Dorsolateral prefrontal cortex (tissue), 120 donors: ENCODE measurements at regions of chr10 and their contacts with region 1.

Region 1: DNA sequence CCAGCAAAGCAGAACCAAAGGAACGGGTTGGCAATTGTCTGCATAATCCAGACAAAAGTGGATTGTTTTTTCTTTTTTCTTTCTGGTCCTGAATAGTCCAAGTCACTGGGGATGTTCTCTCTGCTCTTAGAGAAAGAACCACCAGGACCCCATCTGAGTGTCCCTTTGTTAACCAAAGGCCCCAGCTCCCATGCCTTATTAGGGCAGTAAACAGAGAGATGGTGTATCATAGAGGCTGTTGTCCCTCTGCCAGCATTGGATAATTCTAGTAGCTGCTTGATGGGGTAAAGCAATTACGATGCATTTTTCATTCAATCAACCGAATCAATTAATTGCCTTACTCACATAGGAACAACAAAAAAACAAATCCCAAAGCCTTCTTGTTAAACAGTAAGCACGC is 213.0 kb downstream of the BUB3 start:
- DNase-seq: peak in 3 of 10 donors; percentile 47 to 75 (median 75)
- H3K4me3 ChIP-seq: peak overlapping the region in 1 of 59 donors; percentile 26
- H3K27ac ChIP-seq: peak overlapping the region; percentile 40 to 99 (median 88)
- H3K27me3 ChIP-seq: no peaks in the 10 kb centered on the region
- CTCF ChIP-seq: peak in 3 of 56 donors; percentile 7 to 23 (median 20)

Region 2: GRCh38 chr10:123331438-123331837 is 35.8 kb before region 1 on chr10:
- intact Hi-C with region 1: loop called in 1 of 2 experiments (anchors 5 kb)
- DNase-seq: peak in 1 of 10 donors; percentile 11
- H3K4me3 ChIP-seq: peak overlapping the region in 7 of 59 donors; percentile 6 to 44 (median 17)
- H3K27ac ChIP-seq: peak overlapping the region in 56 of 59 donors; percentile 18 to 94 (median 76)
- H3K27me3 ChIP-seq: peaks cover 0 to under 1% (median 0%) of the 10 kb centered on the region in 45 donors
- CTCF ChIP-seq: peak in 5 of 56 donors; percentile 15 to 27 (median 21)